Prostate gland (tissue), 2 donors: ENCODE measurements at regions of chr1 and their contacts with region 1.

Region 1: GRCh38 chr1:160083968-160084770 is 2.8 kb downstream of the KCNJ9 start:
- DNase-seq: peak; percentile 86
- H3K4me3 ChIP-seq: peak overlapping the region in 1 of 2 donors; percentile 24
- H3K27ac ChIP-seq: no peak overlapping the region
- H3K4me1 ChIP-seq: no peaks in the 10 kb centered on the region
- H3K27me3 ChIP-seq: no peaks in the 10 kb centered on the region
- CTCF ChIP-seq: peak; percentile 60 to 87 (median 78)
- POLR2A ChIP-seq: no peak

Region 2: GRCh38 chr1:160046494-160047110 is 37.6 kb before region 1 on chr1:
- intact Hi-C with region 1: loop called (anchors 5 kb)
- DNase-seq: peak; percentile 5
- H3K4me3 ChIP-seq: no peak overlapping the region
- H3K27ac ChIP-seq: no peak overlapping the region
- H3K4me1 ChIP-seq: no peaks in the 10 kb centered on the region
- H3K27me3 ChIP-seq: no peaks in the 10 kb centered on the region
- CTCF ChIP-seq: peak in 3 of 4 experiments; percentile 59 to 68 (median 60)
- POLR2A ChIP-seq: no peak

Region 3: GRCh38 chr1:160189649-160190625 is 105.8 kb after region 1 on chr1 and contains the start of gene CASQ1:
- intact Hi-C with region 1: no loop called
- DNase-seq: peak; percentile 17
- H3K4me3 ChIP-seq: no peak within 1 kb of the TSS
- H3K27ac ChIP-seq: no peak within 1 kb of the TSS
- H3K4me1 ChIP-seq: peaks cover 3% of the 10 kb centered on the region
- H3K27me3 ChIP-seq: no peaks in the 10 kb centered on the region
- CTCF ChIP-seq: no peak
- POLR2A ChIP-seq: no peak
- total RNA-seq, gene CASQ1: 1.2 to 3.0 TPM

Region 4: DNA sequence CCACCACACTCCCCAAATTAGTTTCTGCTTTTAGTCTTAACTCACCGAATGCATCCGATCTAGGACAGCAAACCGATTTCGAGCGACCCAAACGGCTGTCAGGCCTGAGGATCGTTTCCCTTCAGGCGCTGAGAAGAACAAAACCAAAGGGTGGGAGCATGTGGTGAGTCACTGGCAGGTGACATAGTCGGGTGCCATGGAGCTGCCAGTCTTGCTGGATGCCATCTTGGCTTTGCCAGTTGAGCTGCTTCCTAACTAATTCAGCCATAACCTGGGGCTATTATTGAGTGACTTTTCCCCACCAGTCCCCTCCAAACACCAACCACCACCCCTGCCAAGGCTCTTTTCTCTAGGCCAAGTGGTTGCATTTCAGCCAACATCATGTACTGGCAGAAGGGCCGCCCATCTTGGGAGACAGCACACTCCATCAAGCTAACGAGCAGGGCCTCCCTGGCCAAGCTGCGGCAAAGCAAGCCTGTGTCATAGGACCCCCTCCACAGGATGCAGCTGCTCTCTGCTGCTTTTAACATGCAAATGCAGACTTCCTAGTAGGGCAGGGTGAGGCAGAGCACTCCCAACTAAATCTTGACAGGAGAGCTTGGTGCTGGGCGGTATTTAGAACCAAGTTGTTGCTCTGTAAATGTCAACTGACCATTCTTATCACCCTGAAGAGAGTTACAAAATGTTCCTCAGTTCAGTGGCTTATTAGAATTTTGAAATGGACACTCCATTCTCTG is 223.1 kb after region 1 on chr1:
- intact Hi-C with region 1: no loop called
- DNase-seq: no peak
- H3K4me3 ChIP-seq: no peak overlapping the region
- H3K27ac ChIP-seq: peak overlapping the region in 1 of 2 donors; percentile 15
- H3K4me1 ChIP-seq: no peaks in the 10 kb centered on the region
- H3K27me3 ChIP-seq: no peaks in the 10 kb centered on the region
- CTCF ChIP-seq: no peak
- POLR2A ChIP-seq: no peak